Ascending aorta (tissue), 2 donors: ENCODE measurements at regions of chr12 and their contacts with region 1.

Region 1: GRCh38 chr12:53601296-53601847 is 24.8 kb downstream of the ATF7 start:
- DNase-seq: no peak
- H3K4me3 ChIP-seq: peak overlapping the region; percentile 3 to 51
- H3K27ac ChIP-seq: peak overlapping the region; percentile 31 to 52
- H3K4me1 ChIP-seq: peaks cover 3 to 29% of the 10 kb centered on the region in 2 donors
- H3K27me3 ChIP-seq: no peaks in the 10 kb centered on the region
- CTCF ChIP-seq: no peak

Region 2: DNA sequence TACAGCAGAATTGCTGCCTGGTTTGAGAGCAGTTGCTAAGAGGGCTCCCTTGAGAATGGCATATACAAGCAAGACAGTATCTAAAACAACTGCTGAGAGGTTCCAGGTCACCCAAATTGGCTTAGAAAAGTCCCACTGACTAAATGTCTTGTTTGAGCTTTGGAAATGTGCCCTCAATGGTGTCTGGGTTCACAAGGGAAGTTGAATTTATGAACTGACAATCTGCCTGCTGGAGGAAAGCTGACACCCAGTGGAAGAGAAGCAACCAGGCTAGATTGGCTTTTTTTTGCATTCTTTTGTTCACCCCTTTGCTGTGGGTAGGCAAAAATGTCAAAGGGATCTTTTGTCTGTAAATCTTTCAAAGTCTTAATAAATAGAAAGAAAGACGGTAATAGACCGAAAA is 49.5 kb before region 1 on chr12:
- intact Hi-C with region 1: loop called (anchors 5 kb)
- DNase-seq: no peak
- H3K4me3 ChIP-seq: no peak overlapping the region
- H3K27ac ChIP-seq: peak overlapping the region in 1 of 2 donors; percentile 43
- H3K4me1 ChIP-seq: no peaks in the 10 kb centered on the region
- H3K27me3 ChIP-seq: no peaks in the 10 kb centered on the region
- CTCF ChIP-seq: no peak

Region 3: GRCh38 chr12:53675651-53676453 is 74.5 kb after region 1 on chr12 and contains the start of gene ATP5MC2:
- intact Hi-C with region 1: no loop called
- DNase-seq: peak; percentile 92 to 98
- H3K4me3 ChIP-seq: peak within 1 kb of the TSS; percentile 74 to 92
- H3K27ac ChIP-seq: peak within 1 kb of the TSS; percentile 95 to 96
- H3K4me1 ChIP-seq: peaks cover 7 to 22% of the 10 kb centered on the region in 2 donors
- H3K27me3 ChIP-seq: no peaks in the 10 kb centered on the region
- CTCF ChIP-seq: peak; percentile 96 to 100 (median 98)
- total RNA-seq, gene ATP5MC2: 284 TPM